Heart left ventricle (tissue), 16 donors: ENCODE measurements at regions of chr2 and their contacts with region 1.

Region 1: DNA sequence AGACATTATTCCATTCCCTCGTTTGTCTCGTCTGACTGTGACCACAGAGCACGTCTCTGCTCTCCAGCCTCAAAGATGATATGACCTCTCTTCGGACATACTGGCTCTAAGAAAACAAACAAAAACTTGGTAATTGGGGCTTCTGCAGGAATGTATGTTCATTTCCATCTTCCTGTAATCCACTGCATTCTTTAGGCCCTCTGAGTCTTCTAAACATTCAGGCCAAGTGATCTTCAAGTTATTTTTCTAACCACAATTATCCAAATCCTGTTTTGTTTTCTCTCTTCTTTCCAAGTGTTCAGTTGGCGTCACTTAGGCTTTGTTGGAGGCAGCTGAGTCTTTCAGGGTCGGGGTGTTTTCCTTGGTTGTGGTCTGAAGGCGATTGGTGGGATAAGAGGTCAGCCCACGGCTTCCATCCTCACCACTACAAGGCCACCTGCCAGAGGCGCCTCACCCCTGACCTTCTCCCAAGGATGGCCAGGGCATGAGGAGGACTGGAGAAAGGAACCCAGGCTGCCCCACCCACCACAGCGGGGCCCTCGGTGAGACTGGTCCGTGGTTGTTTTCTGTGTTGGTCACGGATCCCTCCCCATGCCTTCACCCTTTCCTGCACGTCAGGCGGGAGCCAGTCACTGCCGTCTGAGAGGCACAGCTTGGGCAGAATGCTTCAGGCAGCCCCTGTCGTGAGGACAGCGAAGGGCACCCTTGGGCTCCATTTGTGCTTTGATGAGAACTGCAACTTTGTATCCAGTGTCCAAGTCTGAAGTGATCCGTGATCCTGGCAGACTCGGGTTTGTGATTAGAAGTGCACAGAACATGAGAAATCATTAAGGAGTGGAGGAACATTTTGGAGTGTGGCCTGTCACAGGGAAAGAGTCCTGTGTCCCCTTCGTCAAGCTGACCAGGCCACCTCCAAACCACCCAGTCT is 88.6 kb upstream of the FHL2 start:
- DNase-seq: peak; percentile 30 to 88 (median 79)
- ATAC-seq: peak; percentile 61 to 81 (median 68)
- H3K4me3 ChIP-seq: peak overlapping the region in 1 of 12 donors; percentile 17
- H3K27ac ChIP-seq: peak overlapping the region; percentile 81 to 98 (median 88)
- H3K4me1 ChIP-seq: peaks cover 0 to 43% (median 7%) of the 10 kb centered on the region in 12 donors
- H3K27me3 ChIP-seq: no peaks in the 10 kb centered on the region
- CTCF ChIP-seq: peak in 1 of 12 donors; percentile 9
- POLR2A ChIP-seq: no peak

Region 2: DNA sequence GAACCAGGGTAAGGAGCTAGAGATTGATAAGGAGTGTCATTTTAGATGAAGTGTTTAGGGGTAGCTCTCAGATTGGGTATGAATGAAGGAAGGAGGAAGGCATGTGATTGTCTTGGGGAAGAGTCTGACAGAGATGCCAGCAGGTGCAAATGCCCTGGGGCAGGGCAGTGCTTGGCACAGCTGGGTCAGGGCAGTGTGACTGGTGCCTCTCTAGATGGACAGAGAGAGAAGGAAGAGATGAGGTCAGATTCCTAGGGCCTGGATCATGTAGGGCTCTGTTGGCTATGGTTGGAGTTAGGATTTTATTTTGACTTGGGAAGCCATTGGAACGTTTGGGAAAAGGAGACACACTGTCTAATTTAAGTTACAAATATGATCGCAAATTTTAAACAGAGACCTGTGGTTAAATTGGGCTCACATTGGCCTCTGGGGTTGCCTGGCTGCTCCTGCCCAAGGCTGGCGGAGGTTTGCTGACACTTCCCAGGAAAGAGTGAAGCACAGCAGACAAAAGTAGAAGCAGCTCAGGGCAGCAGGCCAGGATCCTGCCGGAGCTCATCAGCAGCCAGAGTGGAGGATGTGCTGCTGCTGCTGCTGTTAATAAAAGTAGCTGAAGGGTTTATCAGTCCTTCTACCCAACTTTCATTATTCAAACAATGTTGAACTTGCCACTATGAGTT is 55.9 kb before region 1 on chr2:
- intact Hi-C with region 1: loop called in 2 of 10 experiments (anchors 2 to 5 kb)
- DNase-seq: peak; percentile 63 to 83 (median 81)
- ATAC-seq: peak; percentile 3 to 63 (median 40)
- H3K4me3 ChIP-seq: peak overlapping the region in 9 of 12 donors; percentile 2 to 67 (median 56)
- H3K27ac ChIP-seq: peak overlapping the region; percentile 60 to 97 (median 85)
- H3K4me1 ChIP-seq: peaks cover 0 to 64% (median 17%) of the 10 kb centered on the region in 12 donors
- H3K27me3 ChIP-seq: no peaks in the 10 kb centered on the region
- CTCF ChIP-seq: no peak
- POLR2A ChIP-seq: peak in 1 of 2 donors; percentile 24

Region 3: GRCh38 chr2:105438104-105438929 is 49.1 kb before region 1 on chr2:
- intact Hi-C with region 1: loop called in 7 of 10 experiments (anchors 1 to 5 kb)
- DNase-seq: peak; percentile 74 to 92 (median 84)
- ATAC-seq: peak; percentile 86 to 91 (median 88)
- H3K4me3 ChIP-seq: peak overlapping the region; percentile 34 to 69 (median 55)
- H3K27ac ChIP-seq: peak overlapping the region; percentile 72 to 97 (median 90)
- H3K4me1 ChIP-seq: peaks cover 0 to 20% (median 0%) of the 10 kb centered on the region in 12 donors
- H3K27me3 ChIP-seq: no peaks in the 10 kb centered on the region
- CTCF ChIP-seq: no peak
- POLR2A ChIP-seq: peak; percentile 49 to 94

Region 4: DNA sequence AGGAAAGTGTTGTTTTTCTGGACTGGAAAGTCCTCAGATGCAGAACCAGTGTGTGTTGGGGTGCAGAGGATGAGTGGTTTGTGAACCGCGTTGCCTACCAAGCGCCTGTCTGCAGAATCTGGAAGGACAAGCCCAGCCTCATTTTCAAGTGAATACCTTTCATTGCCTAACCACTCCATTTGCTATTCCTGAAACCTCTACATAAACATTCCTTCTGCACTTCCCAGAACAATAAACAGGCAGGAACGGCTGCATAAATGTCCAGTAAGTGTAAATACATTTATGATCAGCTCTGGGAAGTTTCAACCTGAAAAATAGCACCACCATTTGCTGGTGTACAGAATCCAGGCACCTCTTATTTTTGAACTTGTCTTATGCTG is 43.2 kb before region 1 on chr2:
- intact Hi-C with region 1: loop called in 4 of 10 experiments (anchors 2 to 5 kb)
- DNase-seq: no peak
- ATAC-seq: no peak
- H3K4me3 ChIP-seq: no peak overlapping the region
- H3K27ac ChIP-seq: no peak overlapping the region
- H3K4me1 ChIP-seq: peaks cover 0 to 15% (median 0%) of the 10 kb centered on the region in 12 donors
- H3K27me3 ChIP-seq: no peaks in the 10 kb centered on the region
- CTCF ChIP-seq: no peak
- POLR2A ChIP-seq: no peak

Region 5: DNA sequence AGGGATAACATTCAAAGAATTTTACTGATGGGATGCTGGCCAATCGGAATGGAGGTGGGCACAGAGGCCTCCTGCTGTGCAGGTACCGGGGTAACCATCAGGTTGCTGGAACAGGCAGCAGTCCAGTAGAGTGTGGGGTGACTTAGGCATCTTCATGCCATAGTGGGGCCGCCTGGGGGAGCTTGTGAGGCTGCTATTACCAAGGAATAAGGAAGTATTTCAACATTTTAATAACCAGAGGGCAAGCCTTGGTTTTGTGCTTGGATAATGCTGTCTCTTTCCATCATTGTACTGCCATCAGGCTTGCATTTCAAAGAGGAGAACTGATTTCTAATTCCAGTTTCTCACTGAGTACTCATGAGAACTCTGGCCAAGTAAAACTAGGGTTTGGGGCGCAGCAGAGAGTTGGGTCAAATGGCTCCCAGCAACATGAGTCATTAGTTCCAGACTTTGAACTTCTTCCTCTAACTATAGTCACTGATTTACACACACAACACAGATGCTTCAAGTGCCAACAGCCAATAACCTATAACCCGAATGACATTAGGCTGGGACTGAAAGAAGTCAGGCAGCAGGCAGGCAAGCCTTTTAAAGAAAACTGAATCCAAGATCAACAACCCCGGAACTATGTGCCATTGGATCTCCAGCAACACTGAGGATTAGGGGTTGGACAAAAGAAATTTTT is 32.5 kb before region 1 on chr2:
- intact Hi-C with region 1: loop called in 1 of 10 experiments (anchors 5 kb)
- DNase-seq: no peak
- ATAC-seq: peak in 3 of 4 donors; percentile 22 to 59 (median 35)
- H3K4me3 ChIP-seq: no peak overlapping the region
- H3K27ac ChIP-seq: peak overlapping the region in 2 of 12 donors; percentile 8 to 57
- H3K4me1 ChIP-seq: peaks cover 0 to 21% (median 0%) of the 10 kb centered on the region in 12 donors
- H3K27me3 ChIP-seq: no peaks in the 10 kb centered on the region
- CTCF ChIP-seq: peak in 4 of 12 donors; percentile 13 to 46 (median 27)
- POLR2A ChIP-seq: no peak

Region 6: GRCh38 chr2:105515581-105516415 is 28.4 kb after region 1 on chr2:
- intact Hi-C with region 1: loop called in 2 of 10 experiments (anchors 1 to 2 kb)
- DNase-seq: peak; percentile 86 to 97 (median 89)
- ATAC-seq: peak; percentile 79 to 88 (median 84)
- H3K4me3 ChIP-seq: no peak overlapping the region
- H3K27ac ChIP-seq: peak overlapping the region; percentile 65 to 93 (median 80)
- H3K4me1 ChIP-seq: peaks cover 0 to 65% (median 25%) of the 10 kb centered on the region in 12 donors
- H3K27me3 ChIP-seq: no peaks in the 10 kb centered on the region
- CTCF ChIP-seq: no peak
- POLR2A ChIP-seq: no peak

Region 7: DNA sequence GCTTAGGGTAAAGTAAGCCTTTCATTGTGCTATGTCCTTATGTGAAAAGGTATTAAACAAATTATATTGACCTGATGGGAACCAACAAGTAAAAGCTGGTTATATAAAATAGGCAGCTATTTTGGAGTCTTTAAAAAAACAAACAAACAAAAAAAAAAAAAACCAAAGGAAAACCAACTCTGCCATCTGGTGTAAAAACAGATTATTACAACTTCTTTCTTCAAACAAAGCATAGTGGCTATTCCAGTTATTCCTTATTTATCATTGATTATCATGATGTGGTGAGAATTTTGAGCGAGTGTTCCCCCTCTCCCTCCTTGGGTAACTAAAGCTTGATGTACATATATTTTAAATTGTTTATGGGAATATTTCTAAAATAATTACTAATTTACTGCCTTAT is 33.8 kb after region 1 on chr2:
- intact Hi-C with region 1: loop called in 1 of 10 experiments (anchors 1 kb)
- DNase-seq: no peak
- ATAC-seq: no peak
- H3K4me3 ChIP-seq: no peak overlapping the region
- H3K27ac ChIP-seq: peak overlapping the region in 6 of 12 donors; percentile 28 to 89 (median 42)
- H3K4me1 ChIP-seq: peaks cover 0 to 39% (median 19%) of the 10 kb centered on the region in 12 donors
- H3K27me3 ChIP-seq: no peaks in the 10 kb centered on the region
- CTCF ChIP-seq: peak; percentile 44 to 74 (median 64)
- POLR2A ChIP-seq: no peak